GM13977 (cell line): ENCODE measurements at regions of chr10 and their contacts with region 1.

Region 1: DNA sequence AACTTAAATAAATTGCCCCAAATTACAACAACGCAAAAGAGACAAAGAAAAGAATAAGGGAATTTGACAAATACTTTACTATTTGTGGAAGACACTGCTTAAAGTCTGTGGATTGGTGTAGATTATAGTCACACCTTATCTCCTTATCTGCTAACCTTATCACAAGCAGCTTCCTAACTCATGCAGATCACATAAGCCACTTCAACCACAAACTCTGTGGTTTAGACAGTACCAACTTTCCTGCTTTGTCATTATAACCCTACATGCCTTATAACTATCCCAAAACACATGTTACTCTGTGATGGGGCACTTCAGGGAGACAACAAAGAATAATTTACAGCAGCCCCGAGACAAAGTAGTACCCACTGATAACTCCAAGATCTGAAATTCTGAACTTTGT is 41.5 kb upstream of the PPP3CB start:
- DNase-seq: no peak
- CTCF ChIP-seq: no peak

Region 2: GRCh38 chr10:73644015-73644743 is 106.9 kb after region 1 on chr10:
- in situ Hi-C with region 1: loop called (anchors 5 kb)
- DNase-seq: peak; percentile 77
- CTCF ChIP-seq: peak; percentile 74